SK-N-SH (cell line): ENCODE measurements at regions of chr17 and their contacts with region 1.

Region 1: DNA sequence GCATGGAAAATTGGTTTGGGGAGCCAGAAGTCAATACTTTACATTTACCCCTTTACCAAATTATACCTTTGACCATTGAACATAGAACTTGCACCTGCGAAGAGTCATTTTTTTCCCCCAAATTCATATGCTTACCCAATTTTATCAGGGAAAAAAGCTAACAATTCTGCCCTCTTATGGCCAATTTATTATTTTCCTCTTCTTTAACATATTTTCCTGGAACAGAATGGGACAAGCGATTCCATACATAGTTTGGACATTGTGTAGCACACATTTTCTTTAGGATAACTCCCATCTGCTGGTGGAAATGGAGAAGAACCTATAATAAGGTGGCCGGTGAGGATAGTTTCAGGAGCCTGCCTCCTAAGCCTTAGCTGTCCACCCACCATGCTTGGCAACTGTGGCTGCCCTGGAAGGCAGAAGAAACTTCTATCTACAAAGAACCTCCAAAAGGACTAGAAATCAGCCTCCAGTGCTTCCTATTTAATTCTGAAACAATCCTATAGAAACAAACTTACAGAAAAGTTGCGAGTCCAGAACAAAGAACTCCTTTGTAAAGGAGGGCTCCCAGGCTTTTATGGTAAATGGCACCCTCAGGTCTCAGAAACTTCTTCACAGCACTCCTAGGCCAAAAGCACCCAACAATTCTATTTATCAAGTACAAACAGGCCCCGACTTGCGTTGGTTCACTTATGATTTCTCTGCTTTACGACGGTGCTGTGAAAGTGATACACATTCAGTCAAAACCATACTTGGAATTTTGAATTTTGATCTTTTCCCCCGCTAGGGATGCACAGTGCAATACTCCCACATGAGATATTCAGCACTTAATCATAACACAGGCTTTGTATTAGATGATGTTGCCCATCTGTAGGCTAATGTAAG is 64.1 kb upstream of the CACNG4 start:
- DNase-seq: peak; percentile 60
- H3K4me3 ChIP-seq: no peak overlapping the region
- H3K27ac ChIP-seq: no peak overlapping the region
- H3K4me1 ChIP-seq: peaks cover 8 to 12% of the 10 kb centered on the region in 2 experiments; a peak in 3 of 4 replicates
- H3K27me3 ChIP-seq: peaks cover 2% of the 10 kb centered on the region; the same call in 1 of the 2 replicates
- CTCF ChIP-seq: peak; percentile 74
- EP300 ChIP-seq: no peak
- RAD21 ChIP-seq: peak; percentile 76

Region 2: GRCh38 chr17:66633317-66633965 is 266.9 kb before region 1 on chr17:
- CTCF ChIA-PET with region 1: no interaction called
- POLR2A ChIA-PET with region 1: no interaction called
- DNase-seq: no peak
- H3K4me3 ChIP-seq: no peak overlapping the region
- H3K27ac ChIP-seq: no peak overlapping the region
- H3K4me1 ChIP-seq: peaks cover 6 to 11% of the 10 kb centered on the region in 2 experiments
- H3K27me3 ChIP-seq: no peaks in the 10 kb centered on the region
- CTCF ChIP-seq: no peak
- EP300 ChIP-seq: no peak
- RAD21 ChIP-seq: no peak

Region 3: GRCh38 chr17:66737524-66737923 is 162.8 kb before region 1 on chr17:
- CTCF ChIA-PET with region 1: interaction called, 10 read pairs
- POLR2A ChIA-PET with region 1: no interaction called
- DNase-seq: no peak
- H3K4me3 ChIP-seq: peak overlapping the region in 1 of 2 experiments; percentile 8; a peak in 1 of 4 replicates
- H3K27ac ChIP-seq: no peak overlapping the region
- H3K4me1 ChIP-seq: no peaks in the 10 kb centered on the region
- H3K27me3 ChIP-seq: no peaks in the 10 kb centered on the region
- CTCF ChIP-seq: no peak
- EP300 ChIP-seq: no peak
- RAD21 ChIP-seq: peak; percentile 15; the same call in 1 of the 2 replicates

Region 4: GRCh38 chr17:66885395-66885794 is 15.0 kb before region 1 on chr17:
- CTCF ChIA-PET with region 1: interaction called, 24 read pairs
- POLR2A ChIA-PET with region 1: no interaction called
- DNase-seq: no peak
- H3K4me3 ChIP-seq: no peak overlapping the region
- H3K27ac ChIP-seq: no peak overlapping the region
- H3K4me1 ChIP-seq: peaks cover 0 to 11% of the 10 kb centered on the region in 2 experiments; a peak in 1 of 4 replicates
- H3K27me3 ChIP-seq: 0 out of 2 replicates have a peak, but pooled peaks cover 7% of the 10 kb centered on the region
- CTCF ChIP-seq: no peak
- EP300 ChIP-seq: no peak
- RAD21 ChIP-seq: no peak